ENCODE measurements at regions of chr22 and their contacts with region 1.

Region 1: DNA sequence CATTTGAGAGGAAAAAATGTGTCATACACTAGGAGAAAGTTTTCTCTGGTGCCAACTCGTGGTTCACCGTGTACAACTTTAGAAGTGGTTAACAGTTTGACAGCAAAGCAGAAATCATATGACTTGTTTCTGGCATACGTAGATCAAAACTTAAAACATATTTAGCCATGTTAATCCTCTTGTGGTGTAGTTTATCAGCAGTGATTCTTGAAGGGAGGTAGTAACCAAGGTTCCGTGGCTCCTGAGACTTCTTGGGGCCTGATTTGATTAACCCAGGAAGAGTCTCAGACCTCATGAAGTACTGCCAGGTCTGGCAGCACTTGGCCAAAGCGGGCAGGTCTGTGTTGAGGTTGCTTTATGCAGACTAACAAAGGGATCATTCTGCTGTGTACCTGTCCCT is 40.5 kb downstream of the SREBF2 start:
- DNase-seq: peak; percentile 70
- ATAC-seq: peak; percentile 86
- H3K4me3 Mint-ChIP-seq: peak overlapping the region; percentile 66
- H3K27ac Mint-ChIP-seq: peak overlapping the region; percentile 87
- H3K4me1 Mint-ChIP-seq: peaks cover 73% of the 10 kb centered on the region
- H3K27me3 Mint-ChIP-seq: no peaks in the 10 kb centered on the region

Region 2: GRCh38 chr22:41800348-41801146 is 72.8 kb before region 1 on chr22 and contains the start of gene CCDC134:
- CTCF ChIA-PET with region 1: interaction called, 4 read pairs
- POLR2A ChIA-PET with region 1: interaction called, 9 read pairs
- intact Hi-C with region 1: loop called in 1 of 2 experiments (anchors 1 kb)
- DNase-seq: peak; percentile 95
- ATAC-seq: peak; percentile 98
- H3K4me3 Mint-ChIP-seq: peak within 1 kb of the TSS; percentile 91
- H3K27ac Mint-ChIP-seq: peak within 1 kb of the TSS; percentile 96
- H3K4me1 Mint-ChIP-seq: peaks cover 38% of the 10 kb centered on the region
- H3K27me3 Mint-ChIP-seq: no peaks in the 10 kb centered on the region
- total RNA-seq, gene CCDC134: 14.7 to 15.2 TPM

Region 3: DNA sequence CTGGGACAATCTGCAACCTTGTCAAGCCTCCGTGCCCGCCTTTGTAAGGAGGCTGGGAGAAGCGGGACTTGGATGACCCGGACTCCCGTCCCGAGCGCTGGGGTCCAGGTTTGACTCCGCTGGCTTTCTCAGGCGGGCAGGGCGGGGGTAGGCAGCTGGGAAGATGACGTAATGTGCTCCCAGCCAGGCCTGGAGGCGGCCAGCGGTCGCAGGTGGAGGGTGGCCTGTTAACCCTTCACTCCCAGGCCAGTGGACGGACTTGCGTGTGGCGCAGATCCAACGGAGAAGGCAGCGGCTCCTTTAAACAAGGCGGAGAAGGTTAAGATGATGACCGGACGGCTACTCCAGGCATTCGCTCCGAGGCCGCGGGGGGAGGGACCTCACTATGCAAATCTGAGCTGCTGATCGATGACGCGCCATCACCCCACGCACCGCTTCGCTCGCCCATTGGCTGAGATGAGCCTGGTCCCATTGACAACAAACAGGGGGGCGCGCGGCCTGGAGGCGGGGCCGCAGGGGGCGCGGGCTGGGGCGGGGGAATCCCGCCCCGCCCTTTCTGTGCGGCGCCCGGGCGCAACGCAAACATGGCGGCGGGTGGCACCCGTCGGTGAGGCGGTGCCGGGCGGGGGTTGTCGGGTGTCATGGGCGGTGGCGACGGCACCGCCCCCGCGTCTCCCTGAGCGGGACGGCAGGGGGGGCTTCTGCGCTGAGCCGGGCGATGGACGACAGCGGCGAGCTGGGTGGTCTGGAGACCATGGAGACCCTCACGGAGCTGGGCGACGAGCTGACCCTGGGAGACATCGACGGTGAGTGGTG is 40.6 kb before region 1 on chr22 and contains the start of gene SREBF2:
- CTCF ChIA-PET with region 1: interaction called, 4 read pairs
- POLR2A ChIA-PET with region 1: interaction called, 5 read pairs
- intact Hi-C with region 1: loop called in 1 of 2 experiments (anchors 1 kb)
- DNase-seq: peak; percentile 100
- ATAC-seq: peak; percentile 94
- H3K4me3 Mint-ChIP-seq: peak within 1 kb of the TSS; percentile 96
- H3K27ac Mint-ChIP-seq: peak within 1 kb of the TSS; percentile 99
- H3K4me1 Mint-ChIP-seq: peaks cover 45% of the 10 kb centered on the region
- H3K27me3 Mint-ChIP-seq: no peaks in the 10 kb centered on the region
- total RNA-seq, gene SREBF2: 101 to 105 TPM

Region 4: GRCh38 chr22:41841085-41841659 is 32.2 kb before region 1 on chr22:
- CTCF ChIA-PET with region 1: interaction called, 6 read pairs
- POLR2A ChIA-PET with region 1: interaction called, 6 read pairs
- intact Hi-C with region 1: loop called in 1 of 2 experiments (anchors 1 kb)
- DNase-seq: no peak
- ATAC-seq: no peak
- H3K4me3 Mint-ChIP-seq: no peak overlapping the region
- H3K27ac Mint-ChIP-seq: no peak overlapping the region
- H3K4me1 Mint-ChIP-seq: peaks cover 84% of the 10 kb centered on the region
- H3K27me3 Mint-ChIP-seq: no peaks in the 10 kb centered on the region

Region 5: DNA sequence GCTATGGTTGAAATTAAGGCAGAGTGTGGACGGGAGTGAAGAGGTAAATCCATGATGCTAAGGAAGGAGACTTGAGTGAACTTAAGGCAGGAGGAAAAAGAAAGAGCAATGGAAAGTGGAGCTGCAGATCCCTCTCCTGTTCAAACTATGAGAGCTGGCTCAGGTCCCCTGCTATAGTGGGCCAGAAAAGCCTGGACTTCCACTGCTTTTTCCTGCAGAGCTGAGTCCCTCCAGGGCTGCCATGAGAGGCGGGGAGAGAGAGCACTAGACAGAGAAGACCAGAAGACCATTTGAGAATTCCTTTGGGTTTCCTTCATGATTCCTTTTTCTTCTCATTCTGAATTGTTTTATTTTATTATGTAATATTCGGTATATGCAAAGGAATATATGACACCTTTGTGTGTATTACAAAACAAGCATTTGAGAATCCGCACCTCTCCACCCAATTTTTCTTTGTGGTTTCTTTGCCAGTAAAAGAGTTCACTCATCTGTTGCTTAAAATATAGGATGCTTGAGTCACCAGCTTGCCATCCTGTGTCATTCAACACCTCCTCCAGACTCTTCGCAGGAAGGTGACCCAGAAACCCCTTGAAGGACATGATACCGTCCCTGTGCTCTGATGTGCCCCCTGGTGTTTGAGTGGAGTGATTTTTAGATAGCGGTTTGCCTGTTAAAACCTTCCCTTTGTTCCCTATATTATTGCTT is 16.1 kb before region 1 on chr22:
- CTCF ChIA-PET with region 1: interaction called, 30 read pairs
- POLR2A ChIA-PET with region 1: interaction called, 62 read pairs
- intact Hi-C with region 1: loop called (anchors 1 kb)
- DNase-seq: peak; percentile 89
- ATAC-seq: peak; percentile 71
- H3K4me3 Mint-ChIP-seq: no peak overlapping the region
- H3K27ac Mint-ChIP-seq: peak overlapping the region; percentile 95
- H3K4me1 Mint-ChIP-seq: peaks cover 76% of the 10 kb centered on the region
- H3K27me3 Mint-ChIP-seq: no peaks in the 10 kb centered on the region

Region 6: DNA sequence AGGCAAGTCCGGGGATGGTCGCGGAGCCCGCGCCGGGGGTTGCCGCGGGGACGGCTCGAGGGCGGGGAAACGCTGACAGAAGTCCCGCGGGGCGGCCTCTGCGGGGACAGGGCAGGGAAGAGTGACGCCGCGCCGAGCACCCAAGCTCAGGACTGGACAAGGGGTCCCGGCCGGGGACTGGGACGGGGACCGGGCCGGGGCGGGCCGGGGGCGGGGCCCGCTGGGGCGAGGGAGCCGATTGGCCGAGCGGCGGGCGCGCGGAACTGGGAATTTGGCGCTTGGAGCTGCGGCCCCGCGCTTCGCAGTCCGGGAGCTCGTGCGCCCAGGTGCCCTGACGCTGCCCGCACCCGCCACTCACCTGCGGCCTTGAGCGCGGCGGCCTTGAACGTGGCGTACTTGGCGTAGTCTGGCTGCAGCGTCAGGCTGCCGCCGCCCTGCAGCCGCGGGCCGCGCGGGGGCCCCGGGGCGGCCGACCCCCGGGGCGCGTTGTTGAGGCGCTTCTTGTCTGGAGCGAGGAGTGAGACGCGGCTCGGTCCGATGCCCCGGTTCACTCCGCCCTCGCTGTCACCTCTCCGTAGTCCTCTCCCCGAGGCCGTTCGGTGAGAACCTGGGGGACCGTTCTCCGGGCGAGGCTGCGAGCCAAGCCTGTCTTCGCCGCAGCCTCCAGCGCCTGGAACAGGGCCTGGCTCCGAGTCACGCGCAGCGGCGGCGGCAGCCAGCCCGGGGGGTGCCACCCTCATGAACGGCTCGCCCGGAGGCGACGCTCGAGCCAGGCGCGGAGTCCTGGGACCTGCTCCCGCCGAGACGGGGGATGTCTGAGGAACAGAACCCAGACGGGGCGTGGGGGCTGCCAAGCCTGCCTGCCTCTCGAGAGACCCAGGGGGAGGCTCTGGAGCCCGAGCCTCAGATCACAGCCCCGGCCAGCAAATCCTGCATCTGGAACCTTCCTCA is 36.9 kb after region 1 on chr22:
- CTCF ChIA-PET with region 1: no interaction called
- POLR2A ChIA-PET with region 1: interaction called, 4 read pairs
- intact Hi-C with region 1: loop called in 1 of 2 experiments (anchors 5 kb)
- DNase-seq: peak; percentile 56
- ATAC-seq: peak; percentile 33
- H3K4me3 Mint-ChIP-seq: no peak overlapping the region
- H3K27ac Mint-ChIP-seq: no peak overlapping the region
- H3K4me1 Mint-ChIP-seq: peaks cover 33% of the 10 kb centered on the region
- H3K27me3 Mint-ChIP-seq: peaks cover 28% of the 10 kb centered on the region